Activated CD8-positive, alpha-beta T cell treated with anti-CD3 and anti-CD28 coated beads, Interleukin-2, amount 10 ng/mL, durations not matched to agents 7 days and 5 days (primary cell): ENCODE measurements at regions of chr9 and their contacts with region 1.

Region 1: DNA sequence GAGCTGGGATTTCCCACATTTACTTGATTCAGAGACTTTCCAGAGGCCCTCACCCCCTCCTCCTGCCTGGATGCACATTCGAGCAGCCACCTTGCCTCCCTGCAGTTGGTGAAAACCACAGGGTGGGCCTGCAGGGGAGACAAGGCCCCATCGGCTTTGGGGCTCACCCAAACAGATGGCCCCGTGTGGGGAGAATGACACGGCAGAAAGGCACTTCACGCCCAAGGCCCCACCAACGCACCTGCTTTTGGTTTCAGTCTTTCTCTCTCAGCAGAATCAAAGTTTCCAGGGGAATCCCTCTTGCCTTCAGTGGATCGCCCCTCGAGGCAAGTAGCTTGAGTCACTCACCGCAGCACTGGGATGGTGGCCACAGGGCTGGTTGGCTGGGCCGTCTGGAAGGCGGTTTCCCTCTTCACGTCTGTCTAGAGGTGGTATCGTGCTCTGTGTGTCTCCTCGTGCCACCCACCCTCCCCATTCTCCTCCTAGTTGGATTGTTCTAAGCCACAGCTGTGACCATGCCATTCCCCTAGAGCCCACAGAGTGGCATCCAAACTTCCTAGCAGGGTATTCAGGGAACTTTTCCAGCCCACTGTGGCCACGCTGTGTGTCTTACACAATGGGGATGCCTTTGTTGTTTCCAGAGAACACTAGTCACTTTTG is 31.8 kb downstream of the SEC61B start:
- DNase-seq: peak; percentile 83
- ATAC-seq: peak; percentile 89
- H3K4me3 Mint-ChIP-seq: peak overlapping the region; percentile 68
- H3K27ac Mint-ChIP-seq: peak overlapping the region; percentile 87
- H3K4me1 Mint-ChIP-seq: peaks cover 31% of the 10 kb centered on the region
- H3K27me3 Mint-ChIP-seq: no peaks in the 10 kb centered on the region

Region 2: GRCh38 chr9:99221621-99222415 is 32.1 kb before region 1 on chr9 and contains the starts of genes ALG2 and SEC61B:
- CTCF ChIA-PET with region 1: interaction called, 4 read pairs
- POLR2A ChIA-PET with region 1: interaction called, 13 read pairs
- DNase-seq: peak; percentile 97
- ATAC-seq: peak; percentile 91
- H3K4me3 Mint-ChIP-seq: peak within 1 kb of the TSS; percentile 97
- H3K27ac Mint-ChIP-seq: peak within 1 kb of the TSS; percentile 99
- H3K4me1 Mint-ChIP-seq: peaks cover 57% of the 10 kb centered on the region
- H3K27me3 Mint-ChIP-seq: no peaks in the 10 kb centered on the region
- total RNA-seq, gene ALG2: 19.9 to 22.0 TPM
- total RNA-seq, gene SEC61B: 122 to 124 TPM

Region 3: GRCh38 chr9:99368341-99369323 is 114.7 kb after region 1 on chr9:
- CTCF ChIA-PET with region 1: no interaction called
- POLR2A ChIA-PET with region 1: no interaction called
- DNase-seq: peak; percentile 30
- ATAC-seq: peak; percentile 54
- H3K4me3 Mint-ChIP-seq: peak overlapping the region; percentile 48
- H3K27ac Mint-ChIP-seq: peak overlapping the region; percentile 3
- H3K4me1 Mint-ChIP-seq: peaks cover 26% of the 10 kb centered on the region
- H3K27me3 Mint-ChIP-seq: peaks cover 12% of the 10 kb centered on the region

Region 4: DNA sequence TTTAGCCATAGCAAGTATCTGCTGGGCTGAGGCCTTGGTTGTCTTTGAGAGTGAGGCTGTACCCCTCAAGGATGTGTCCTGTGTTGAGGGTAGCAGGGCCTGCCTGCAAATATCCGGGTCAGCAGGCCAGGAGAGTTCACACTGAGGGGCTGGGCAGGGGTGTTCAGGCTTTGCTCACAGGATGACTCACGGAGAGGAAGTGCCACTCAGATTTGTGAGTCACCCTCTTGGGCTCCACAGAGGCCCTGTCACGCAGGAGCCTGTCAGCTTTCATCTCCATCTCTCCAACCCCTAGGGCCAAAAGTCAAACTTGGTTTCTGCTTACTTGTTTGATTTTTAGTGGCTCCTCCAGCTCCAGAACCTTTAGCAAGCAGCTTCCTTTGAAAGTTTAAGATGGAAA is 179.7 kb after region 1 on chr9:
- CTCF ChIA-PET with region 1: no interaction called
- POLR2A ChIA-PET with region 1: no interaction called
- DNase-seq: peak; percentile 81
- ATAC-seq: peak; percentile 99
- H3K4me3 Mint-ChIP-seq: no peak overlapping the region
- H3K27ac Mint-ChIP-seq: peak overlapping the region; percentile 80
- H3K4me1 Mint-ChIP-seq: peaks cover 21% of the 10 kb centered on the region
- H3K27me3 Mint-ChIP-seq: no peaks in the 10 kb centered on the region

Region 5: GRCh38 chr9:99531313-99531712 is 277.4 kb after region 1 on chr9:
- CTCF ChIA-PET with region 1: no interaction called
- POLR2A ChIA-PET with region 1: no interaction called
- DNase-seq: no peak
- ATAC-seq: no peak
- H3K4me3 Mint-ChIP-seq: no peak overlapping the region
- H3K27ac Mint-ChIP-seq: no peak overlapping the region
- H3K4me1 Mint-ChIP-seq: no peaks in the 10 kb centered on the region
- H3K27me3 Mint-ChIP-seq: peaks cover 30% of the 10 kb centered on the region